AG04449 (cell line): ENCODE measurements at regions of chr10 and their contacts with region 1.

Region 1: DNA sequence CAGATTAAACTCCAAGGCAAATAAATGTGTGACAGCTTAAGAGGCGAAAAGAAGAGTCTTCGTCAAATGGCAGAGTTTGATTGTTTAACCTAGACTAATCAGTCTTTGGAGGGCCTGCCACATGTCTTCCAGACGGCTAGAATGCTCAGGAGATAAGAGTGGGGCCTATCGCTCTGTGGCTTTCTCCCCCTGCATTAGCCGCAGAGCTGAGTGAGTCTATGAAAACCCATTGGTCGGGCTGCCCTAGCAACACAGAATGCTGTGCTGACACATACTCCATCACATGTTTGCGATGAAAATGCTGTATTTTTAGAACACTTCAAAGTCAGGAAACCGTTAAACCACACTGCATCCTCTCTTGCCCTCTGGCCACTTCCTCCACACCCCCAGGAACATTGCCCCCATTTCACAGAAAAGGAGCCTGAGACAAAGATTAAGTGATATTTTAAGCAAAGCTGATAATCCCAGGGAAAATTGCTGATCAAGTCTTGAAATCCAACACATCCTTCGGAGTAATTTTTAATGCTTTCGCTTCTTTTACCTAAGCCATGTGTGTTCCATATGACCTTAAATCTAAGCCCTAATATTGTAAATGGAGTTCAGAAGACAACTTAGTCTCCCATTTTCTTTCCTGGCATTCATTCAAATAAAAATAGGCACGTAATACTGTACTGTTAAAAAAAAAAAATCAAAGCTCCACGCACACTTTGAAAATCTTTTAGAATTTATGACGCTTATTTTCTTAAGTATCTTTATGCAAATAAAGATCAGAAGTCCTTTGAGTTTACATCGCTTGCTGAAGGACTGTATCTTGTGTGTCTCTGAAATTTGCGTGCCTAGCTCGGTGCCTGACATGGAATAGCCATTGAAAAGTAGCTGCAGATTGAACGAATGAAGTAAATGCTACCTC is 161.2 kb downstream of the CELF2 start:
- DNase-seq: peak; percentile 52
- H3K4me3 ChIP-seq: no peak overlapping the region
- CTCF ChIP-seq: no peak

Region 2: GRCh38 chr10:11165591-11166543 is 13.0 kb before region 1 on chr10:
- CTCF ChIA-PET with region 1: interaction called, 13 read pairs
- POLR2A ChIA-PET with region 1: interaction called, 6 read pairs
- DNase-seq: no peak
- H3K4me3 ChIP-seq: peak overlapping the region; percentile 64
- CTCF ChIP-seq: peak; percentile 64

Region 3: DNA sequence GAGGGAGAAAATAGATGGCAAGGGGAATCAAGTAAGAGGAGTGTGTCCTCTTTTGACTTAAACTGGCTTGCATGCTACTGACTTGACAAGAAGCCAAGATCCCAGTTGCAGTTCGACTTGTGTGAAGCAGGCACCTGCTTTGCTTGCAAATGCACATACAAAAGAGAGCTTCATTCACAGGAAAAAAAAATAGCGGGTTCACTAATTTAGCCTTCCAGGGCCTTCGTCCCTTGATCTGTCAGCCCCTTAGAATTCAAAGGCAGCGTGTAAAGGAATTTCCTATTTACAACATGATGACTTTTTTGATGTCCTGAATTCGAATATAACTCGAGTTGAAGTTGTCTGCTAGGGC is 30.9 kb after region 1 on chr10:
- CTCF ChIA-PET with region 1: no interaction called
- POLR2A ChIA-PET with region 1: no interaction called
- DNase-seq: no peak
- H3K4me3 ChIP-seq: no peak overlapping the region
- CTCF ChIP-seq: no peak